ENCODE measurements at regions of chr1 and their contacts with region 1.

Region 1: GRCh38 chr1:230212405-230212936 is 145.4 kb downstream of the GALNT2 start:
- DNase-seq: no peak
- ATAC-seq: peak; percentile 60
- H3K4me3 Mint-ChIP-seq: peak overlapping the region; percentile 65
- H3K27ac Mint-ChIP-seq: peak overlapping the region; percentile 84
- H3K4me1 Mint-ChIP-seq: peaks cover 97% of the 10 kb centered on the region
- H3K27me3 Mint-ChIP-seq: no peaks in the 10 kb centered on the region
- CTCF ChIP-seq: no peak

Region 2: DNA sequence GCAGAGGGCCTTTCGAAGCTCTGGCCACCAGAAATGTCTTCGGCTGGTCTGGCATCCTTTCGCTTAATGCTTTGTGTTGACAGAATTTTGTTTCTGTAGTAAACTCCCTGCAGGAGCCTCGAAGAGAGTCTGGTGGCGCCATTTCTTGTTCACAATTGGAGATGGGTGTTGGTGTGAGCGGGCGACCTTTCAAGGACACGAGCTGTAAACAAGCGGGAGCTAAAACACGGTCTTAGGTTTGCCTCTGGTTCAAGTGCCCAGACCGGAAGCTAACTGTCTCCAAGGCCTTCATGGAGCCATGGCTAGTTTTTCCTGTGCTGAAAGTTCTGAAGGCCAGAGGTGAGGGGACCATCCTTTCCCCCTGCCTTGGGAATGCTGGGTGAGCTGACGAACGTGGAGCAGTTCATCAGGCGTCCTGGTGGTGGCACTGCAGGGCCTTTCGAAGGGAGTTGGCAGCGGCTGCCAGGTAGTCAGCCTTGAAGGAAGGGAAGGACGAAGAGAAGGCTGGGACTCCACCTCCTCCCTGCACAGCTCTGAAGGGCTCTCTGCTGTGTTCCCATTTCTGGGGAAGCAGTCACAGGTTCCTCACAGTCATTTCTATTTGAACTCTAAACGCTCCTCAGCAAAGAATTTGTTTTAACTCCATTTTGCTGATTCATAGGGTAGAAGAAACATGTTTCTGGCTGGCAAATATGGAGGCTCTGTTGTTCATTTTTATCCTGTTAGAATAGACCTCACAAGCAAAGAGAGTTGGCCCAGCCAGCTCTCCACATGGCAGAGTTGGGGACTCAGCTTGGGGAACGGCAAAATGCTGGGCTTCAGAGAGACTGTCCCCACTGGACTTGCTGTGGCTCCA is 551.2 kb before region 1 on chr1:
- CTCF ChIA-PET with region 1: interaction called, 3 read pairs
- POLR2A ChIA-PET with region 1: no interaction called
- intact Hi-C with region 1: loop called (anchors 2 kb)
- DNase-seq: peak; percentile 70
- ATAC-seq: peak; percentile 87
- H3K4me3 Mint-ChIP-seq: no peak overlapping the region
- H3K27ac Mint-ChIP-seq: peak overlapping the region; percentile 50
- H3K4me1 Mint-ChIP-seq: peaks cover 11% of the 10 kb centered on the region
- H3K27me3 Mint-ChIP-seq: no peaks in the 10 kb centered on the region
- CTCF ChIP-seq: peak; percentile 21

Region 3: DNA sequence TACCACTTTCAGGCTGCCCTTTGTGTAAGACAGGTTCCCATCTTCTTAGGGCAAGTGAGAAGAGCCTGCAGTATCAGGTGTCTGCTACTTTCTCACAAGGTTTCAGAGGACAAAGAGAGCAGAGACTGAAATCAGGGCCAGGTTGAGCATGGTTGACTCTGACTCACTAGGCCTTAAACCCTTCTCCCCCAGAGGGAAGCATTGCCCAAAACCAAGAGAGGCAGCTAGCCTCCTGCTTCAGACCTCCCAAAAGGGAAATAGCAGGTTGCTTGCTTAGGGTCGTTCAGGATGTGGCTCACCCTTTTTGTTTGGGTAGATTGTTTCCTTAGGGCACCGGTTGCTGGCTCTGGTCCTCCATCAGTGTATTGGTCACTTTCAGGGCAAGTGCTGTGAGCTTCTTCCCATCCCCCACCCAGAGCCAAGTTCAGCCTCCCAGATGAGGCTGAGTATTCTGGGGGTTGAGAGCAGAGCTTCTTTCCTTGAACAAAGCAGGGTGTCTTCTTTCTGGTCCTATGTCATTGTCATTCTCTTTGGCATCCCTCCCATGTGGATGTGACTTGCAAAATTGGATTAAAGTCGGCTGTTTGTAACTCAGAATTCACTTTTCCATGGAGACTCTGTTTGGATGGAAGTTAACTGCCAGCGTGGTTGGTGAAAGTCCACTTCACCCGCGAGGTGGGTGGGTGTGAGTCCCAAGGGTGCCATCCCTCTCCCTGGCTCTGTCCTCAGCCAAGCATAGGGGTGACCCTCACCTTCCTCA is 201.0 kb before region 1 on chr1:
- CTCF ChIA-PET with region 1: no interaction called
- POLR2A ChIA-PET with region 1: no interaction called
- intact Hi-C with region 1: no loop called
- DNase-seq: no peak
- ATAC-seq: peak; percentile 52
- H3K4me3 Mint-ChIP-seq: no peak overlapping the region
- H3K27ac Mint-ChIP-seq: no peak overlapping the region
- H3K4me1 Mint-ChIP-seq: no peaks in the 10 kb centered on the region
- H3K27me3 Mint-ChIP-seq: peaks cover 9% of the 10 kb centered on the region
- CTCF ChIP-seq: no peak

Region 4: DNA sequence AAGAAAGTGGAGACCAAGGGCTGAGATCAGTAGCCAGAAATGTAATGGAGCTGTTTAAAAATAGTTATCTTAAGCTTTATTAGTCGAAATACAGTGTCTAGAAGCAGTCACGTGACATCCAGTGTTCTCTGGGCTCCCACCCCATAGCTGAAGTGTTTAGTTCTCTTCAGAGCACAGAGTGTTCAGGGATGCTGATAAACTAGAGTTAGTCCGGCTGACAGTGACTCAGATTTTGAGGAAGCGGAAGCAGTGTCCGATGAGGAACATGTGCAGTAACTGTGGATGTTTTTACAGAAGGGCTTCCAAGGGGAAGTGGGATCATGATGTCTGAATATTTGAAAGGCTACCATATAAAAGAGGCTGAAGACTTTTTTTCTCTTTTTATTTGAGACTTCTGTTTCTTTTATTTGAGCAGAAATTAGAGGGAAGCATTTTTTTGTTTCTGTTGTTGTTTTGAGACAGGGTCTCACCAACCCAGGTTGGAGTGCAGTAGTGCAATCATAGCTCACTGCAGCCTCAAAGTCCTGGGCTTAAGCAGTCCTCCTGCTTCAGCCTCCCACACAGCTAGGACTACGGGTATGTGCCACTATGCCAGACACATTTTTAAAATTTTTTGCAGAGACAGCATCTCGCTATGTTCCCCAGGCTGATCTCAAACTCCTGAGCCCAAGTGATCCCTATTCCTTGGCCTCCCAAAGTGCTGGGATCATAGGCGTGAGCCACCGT is 21.2 kb before region 1 on chr1:
- CTCF ChIA-PET with region 1: no interaction called
- POLR2A ChIA-PET with region 1: interaction called, 3 read pairs
- intact Hi-C with region 1: loop called (anchors 2 kb)
- DNase-seq: no peak
- ATAC-seq: peak; percentile 70
- H3K4me3 Mint-ChIP-seq: peak overlapping the region; percentile 13
- H3K27ac Mint-ChIP-seq: peak overlapping the region; percentile 54
- H3K4me1 Mint-ChIP-seq: peaks cover 40% of the 10 kb centered on the region
- H3K27me3 Mint-ChIP-seq: no peaks in the 10 kb centered on the region
- CTCF ChIP-seq: no peak

Region 5: GRCh38 chr1:230292689-230293389 is 80.4 kb after region 1 on chr1:
- CTCF ChIA-PET with region 1: no interaction called
- POLR2A ChIA-PET with region 1: no interaction called
- intact Hi-C with region 1: loop called (anchors 5 kb)
- DNase-seq: no peak
- ATAC-seq: no peak
- H3K4me3 Mint-ChIP-seq: no peak overlapping the region
- H3K27ac Mint-ChIP-seq: peak overlapping the region; percentile 59
- H3K4me1 Mint-ChIP-seq: peaks cover 58% of the 10 kb centered on the region
- H3K27me3 Mint-ChIP-seq: no peaks in the 10 kb centered on the region
- CTCF ChIP-seq: no peak